ENCODE measurements at regions of chr12 and their contacts with region 1.

Region 1: DNA sequence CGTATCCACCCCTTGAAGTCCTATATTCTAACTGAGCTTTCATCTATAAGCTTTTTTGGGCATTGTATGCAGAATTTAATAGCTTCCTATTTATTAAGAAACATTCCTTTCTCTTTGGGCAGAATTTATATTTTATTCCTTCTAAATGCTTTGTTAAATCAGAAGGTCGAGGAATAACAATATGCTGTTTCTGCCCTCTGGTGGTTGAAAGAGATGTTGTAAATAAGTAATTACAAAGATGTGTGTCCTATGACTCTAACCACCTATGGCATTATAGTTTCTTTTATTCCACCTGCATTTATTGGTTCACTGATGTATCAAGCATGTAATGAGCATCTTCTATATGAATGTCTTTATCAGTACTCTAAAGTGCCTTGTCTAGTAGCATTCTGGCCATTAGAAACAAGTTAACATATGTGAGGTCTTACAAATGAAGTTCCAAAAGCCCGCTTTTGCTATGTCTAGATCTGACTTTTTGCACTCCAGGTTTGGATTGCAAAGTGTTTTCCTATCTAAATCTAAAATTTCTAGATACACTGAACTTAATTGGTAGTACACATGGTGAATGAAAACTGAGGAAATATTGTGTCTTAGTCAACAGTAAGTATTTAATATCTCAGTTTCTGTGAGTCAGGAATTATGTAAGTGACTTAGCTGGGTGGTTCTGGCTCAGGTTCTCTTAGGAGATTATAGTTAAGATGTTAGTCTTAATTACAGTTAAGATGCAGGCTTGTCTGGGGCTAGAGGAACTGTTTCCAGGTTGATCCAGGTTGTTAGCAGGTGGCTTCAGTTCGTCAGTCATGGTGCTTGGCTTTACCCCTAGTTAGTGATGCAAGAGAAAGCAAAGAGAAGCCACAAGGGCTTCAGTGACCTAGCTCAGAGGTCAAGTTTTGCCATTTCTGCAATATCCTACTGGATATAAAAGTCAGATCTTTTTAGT is 57.5 kb downstream of the PLEKHA5 start:
- DNase-seq: peak; percentile 55
- H3K4me3 ChIP-seq: no peak overlapping the region
- H3K27ac ChIP-seq: no peak overlapping the region
- H3K4me1 ChIP-seq: peaks cover 16% of the 10 kb centered on the region
- H3K27me3 ChIP-seq: no peaks in the 10 kb centered on the region
- CTCF ChIP-seq: peak; percentile 57 to 59

Region 2: GRCh38 chr12:18250313-18250916 is 936.6 kb before region 1 on chr12:
- CTCF ChIA-PET with region 1: no interaction called
- dilution Hi-C with region 1: no loop called
- in situ Hi-C with region 1: loop called (anchors 25 kb)
- intact Hi-C with region 1: no loop called
- DNase-seq: peak; percentile 58
- H3K4me3 ChIP-seq: no peak overlapping the region
- H3K27ac ChIP-seq: no peak overlapping the region
- H3K4me1 ChIP-seq: peaks cover 4% of the 10 kb centered on the region
- H3K27me3 ChIP-seq: no peaks in the 10 kb centered on the region
- CTCF ChIP-seq: peak; percentile 70 to 72

Region 3: DNA sequence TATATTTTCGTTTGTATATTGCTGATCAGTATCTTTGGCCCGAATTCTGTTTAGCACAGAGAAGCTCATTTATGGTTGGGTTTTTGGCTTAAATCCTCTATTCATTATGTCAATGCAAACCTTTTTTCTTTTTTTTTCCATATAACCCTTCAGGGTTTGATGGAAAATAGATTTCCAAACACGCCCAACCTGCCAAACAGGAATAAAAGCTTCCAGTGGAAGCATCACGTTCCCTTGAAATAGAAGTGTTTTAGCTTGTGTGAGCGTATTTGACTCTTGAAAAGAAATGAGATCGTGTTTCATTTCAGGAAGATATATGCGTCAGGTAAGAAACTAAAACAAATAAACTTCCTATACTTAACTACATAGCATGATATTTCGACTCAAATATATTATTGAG is 925.7 kb before region 1 on chr12 and contains the start of gene PIK3C2G:
- CTCF ChIA-PET with region 1: no interaction called
- dilution Hi-C with region 1: no loop called
- in situ Hi-C with region 1: loop called (anchors 25 kb)
- intact Hi-C with region 1: loop called (anchors 5 kb)
- DNase-seq: peak; percentile 62
- H3K4me3 ChIP-seq: peak within 1 kb of the TSS; percentile 45 to 99 (median 66)
- H3K27ac ChIP-seq: peak within 1 kb of the TSS; percentile 97
- H3K4me1 ChIP-seq: peaks cover 7% of the 10 kb centered on the region
- H3K27me3 ChIP-seq: no peaks in the 10 kb centered on the region
- CTCF ChIP-seq: no peak
- total RNA-seq, gene PIK3C2G: 8.6 to 18.2 TPM

Region 4: DNA sequence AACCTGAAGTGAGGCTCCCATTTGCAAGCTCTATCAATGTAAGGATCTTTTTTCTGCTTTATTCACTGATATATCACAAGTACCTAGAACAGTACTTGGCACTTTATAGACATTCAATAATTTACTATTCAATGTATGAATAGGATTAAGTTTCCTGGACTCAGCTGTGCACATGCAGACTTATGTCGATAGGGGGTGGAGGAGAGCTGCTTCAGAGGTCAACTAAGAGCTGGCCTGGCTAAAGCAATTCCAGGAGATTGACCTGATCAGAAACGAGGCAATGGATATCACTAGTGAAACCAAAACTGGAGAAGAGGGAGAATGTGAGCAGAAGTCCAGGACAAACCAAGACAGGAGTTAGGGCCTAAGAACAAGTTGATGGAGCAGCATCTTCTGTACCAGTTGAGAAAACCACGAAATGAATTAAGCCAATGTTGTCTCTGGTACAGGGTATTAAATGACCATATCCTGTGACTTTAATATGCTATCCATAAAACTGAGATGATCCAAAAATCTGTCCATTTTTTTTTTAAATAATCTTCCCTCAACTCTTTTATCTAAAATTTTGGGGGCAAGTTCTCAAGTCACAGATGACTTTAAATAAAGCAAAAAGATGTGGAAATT is 756.5 kb before region 1 on chr12:
- CTCF ChIA-PET with region 1: interaction called, 8 read pairs
- dilution Hi-C with region 1: no loop called
- in situ Hi-C with region 1: no loop called
- intact Hi-C with region 1: loop called (anchors 1 kb)
- DNase-seq: peak; percentile 38
- H3K4me3 ChIP-seq: no peak overlapping the region
- H3K27ac ChIP-seq: no peak overlapping the region
- H3K4me1 ChIP-seq: no peaks in the 10 kb centered on the region
- H3K27me3 ChIP-seq: no peaks in the 10 kb centered on the region
- CTCF ChIP-seq: peak; percentile 95

Region 5: GRCh38 chr12:18861287-18861858 is 325.6 kb before region 1 on chr12:
- CTCF ChIA-PET with region 1: no interaction called
- dilution Hi-C with region 1: no loop called
- in situ Hi-C with region 1: loop called in 1 of 2 experiments (anchors 25 kb)
- intact Hi-C with region 1: loop called (anchors 1 kb)
- DNase-seq: peak; percentile 26
- H3K4me3 ChIP-seq: no peak overlapping the region
- H3K27ac ChIP-seq: no peak overlapping the region
- H3K4me1 ChIP-seq: peaks cover 15% of the 10 kb centered on the region
- H3K27me3 ChIP-seq: no peaks in the 10 kb centered on the region
- CTCF ChIP-seq: peak; percentile 56 to 76

Region 6: GRCh38 chr12:18998343-18999261 is 188.4 kb before region 1 on chr12:
- CTCF ChIA-PET with region 1: no interaction called
- dilution Hi-C with region 1: no loop called
- in situ Hi-C with region 1: no loop called
- intact Hi-C with region 1: loop called (anchors 5 kb)
- DNase-seq: peak; percentile 86
- H3K4me3 ChIP-seq: peak overlapping the region in 2 of 3 experiments; percentile 16 to 50
- H3K27ac ChIP-seq: peak overlapping the region; percentile 99
- H3K4me1 ChIP-seq: peaks cover 29% of the 10 kb centered on the region
- H3K27me3 ChIP-seq: no peaks in the 10 kb centered on the region
- CTCF ChIP-seq: no peak

Region 7: GRCh38 chr12:19045426-19045825 is 141.6 kb before region 1 on chr12:
- CTCF ChIA-PET with region 1: no interaction called
- dilution Hi-C with region 1: no loop called
- in situ Hi-C with region 1: no loop called
- intact Hi-C with region 1: no loop called
- DNase-seq: no peak
- H3K4me3 ChIP-seq: no peak overlapping the region
- H3K27ac ChIP-seq: no peak overlapping the region
- H3K4me1 ChIP-seq: no peaks in the 10 kb centered on the region
- H3K27me3 ChIP-seq: no peaks in the 10 kb centered on the region
- CTCF ChIP-seq: no peak

Region 8: DNA sequence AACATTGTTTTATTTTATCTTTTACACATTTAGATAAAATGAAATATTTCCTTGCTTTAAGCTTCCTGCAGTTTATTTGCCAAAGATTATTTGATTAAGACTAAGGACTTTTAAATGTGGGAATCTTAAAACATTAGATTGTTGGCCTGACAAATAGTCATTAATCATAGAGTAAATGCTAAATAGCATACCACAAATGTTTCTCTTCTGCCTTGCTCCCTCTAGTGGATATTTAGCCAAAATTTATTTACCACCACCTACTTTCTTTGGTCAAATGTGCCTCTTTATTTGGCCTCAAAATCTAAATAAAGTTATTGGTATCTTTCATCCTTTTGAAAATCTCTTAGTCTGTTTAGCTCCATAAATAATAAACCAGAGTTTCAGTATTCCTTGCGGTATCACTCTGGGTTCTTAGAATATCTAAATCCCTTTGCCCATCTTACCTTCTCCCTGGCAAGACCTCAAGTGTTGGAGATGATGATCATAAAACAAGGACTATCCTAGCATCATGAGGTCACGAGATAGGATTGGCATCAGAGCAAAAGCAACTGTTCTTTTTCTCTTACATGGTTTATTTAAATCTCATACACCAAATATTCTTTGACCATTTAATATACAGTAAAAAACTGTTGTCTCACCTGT is 101.7 kb after region 1 on chr12:
- CTCF ChIA-PET with region 1: no interaction called
- dilution Hi-C with region 1: no loop called
- in situ Hi-C with region 1: no loop called
- intact Hi-C with region 1: loop called (anchors 5 kb)
- DNase-seq: peak; percentile 23
- H3K4me3 ChIP-seq: no peak overlapping the region
- H3K27ac ChIP-seq: no peak overlapping the region
- H3K4me1 ChIP-seq: no peaks in the 10 kb centered on the region
- H3K27me3 ChIP-seq: no peaks in the 10 kb centered on the region
- CTCF ChIP-seq: peak; percentile 56 to 63

Measured in mammary epithelial cell (primary cell).